Breast epithelium (tissue), 4 donors: ENCODE measurements at regions of chr16 and their contacts with region 1.

Region 1: DNA sequence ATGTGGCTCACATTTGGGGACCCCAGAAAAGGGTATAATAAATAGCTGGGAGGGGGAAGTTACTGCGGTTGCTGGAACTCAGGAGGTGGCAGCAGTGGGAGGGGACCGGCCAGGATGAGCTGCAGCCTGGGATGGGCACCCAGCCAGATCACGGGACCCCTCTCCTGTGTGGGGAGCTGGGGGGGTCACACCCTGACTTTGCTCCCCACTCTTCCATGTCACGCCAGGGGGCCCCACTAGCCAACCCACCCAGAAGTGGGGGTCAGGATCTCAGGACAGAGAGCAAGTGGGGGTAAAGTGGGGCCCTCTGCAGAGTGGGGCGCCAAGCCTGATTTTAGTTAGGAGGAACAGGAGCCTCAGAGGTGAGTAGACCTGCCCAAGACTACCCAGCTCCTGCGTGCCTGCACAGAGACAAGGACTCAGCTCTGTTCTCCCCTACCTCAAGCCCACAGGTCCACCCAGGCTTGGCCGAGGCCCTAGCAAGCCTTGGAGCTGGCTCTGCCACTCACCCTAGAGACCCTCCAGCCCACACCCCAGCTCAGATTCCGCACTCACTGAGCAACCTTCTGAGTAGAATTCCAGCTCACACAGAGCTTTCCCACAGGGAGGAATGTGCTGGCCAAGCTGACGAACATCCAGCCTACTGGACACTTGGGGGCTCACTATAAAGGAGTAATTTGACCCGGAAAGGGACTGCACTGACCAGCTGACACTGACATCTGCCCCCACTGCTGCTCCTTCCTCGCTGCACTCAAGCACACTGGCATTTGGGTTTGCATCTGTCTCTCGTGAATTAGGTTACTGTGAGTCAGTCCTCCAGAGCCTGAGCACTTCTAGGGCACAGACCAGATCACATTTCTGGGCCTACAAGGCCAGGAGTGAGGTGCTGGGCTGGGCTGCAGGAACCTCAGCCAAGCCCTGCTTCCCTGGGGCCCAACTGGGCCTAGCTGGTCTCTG is 310.1 kb downstream of the C16orf95 start:
- DNase-seq: no peak
- H3K4me3 ChIP-seq: no peak overlapping the region
- H3K27ac ChIP-seq: no peak overlapping the region
- H3K4me1 ChIP-seq: no peaks in the 10 kb centered on the region
- H3K27me3 ChIP-seq: no peaks in the 10 kb centered on the region
- CTCF ChIP-seq: no peak
- POLR2A ChIP-seq: no peak

Region 2: GRCh38 chr16:86732621-86733295 is 274.3 kb before region 1 on chr16:
- intact Hi-C with region 1: no loop called
- DNase-seq: no peak
- H3K4me3 ChIP-seq: no peak overlapping the region
- H3K27ac ChIP-seq: no peak overlapping the region
- H3K4me1 ChIP-seq: no peaks in the 10 kb centered on the region
- H3K27me3 ChIP-seq: peaks cover 0 to 14% of the 10 kb centered on the region in 2 donors
- CTCF ChIP-seq: no peak
- POLR2A ChIP-seq: no peak

Region 3: GRCh38 chr16:86965840-86966545 is 41.1 kb before region 1 on chr16:
- intact Hi-C with region 1: loop called (anchors 1 kb)
- DNase-seq: no peak
- H3K4me3 ChIP-seq: no peak overlapping the region
- H3K27ac ChIP-seq: no peak overlapping the region
- H3K4me1 ChIP-seq: no peaks in the 10 kb centered on the region
- H3K27me3 ChIP-seq: no peaks in the 10 kb centered on the region
- CTCF ChIP-seq: no peak
- POLR2A ChIP-seq: no peak

Region 4: DNA sequence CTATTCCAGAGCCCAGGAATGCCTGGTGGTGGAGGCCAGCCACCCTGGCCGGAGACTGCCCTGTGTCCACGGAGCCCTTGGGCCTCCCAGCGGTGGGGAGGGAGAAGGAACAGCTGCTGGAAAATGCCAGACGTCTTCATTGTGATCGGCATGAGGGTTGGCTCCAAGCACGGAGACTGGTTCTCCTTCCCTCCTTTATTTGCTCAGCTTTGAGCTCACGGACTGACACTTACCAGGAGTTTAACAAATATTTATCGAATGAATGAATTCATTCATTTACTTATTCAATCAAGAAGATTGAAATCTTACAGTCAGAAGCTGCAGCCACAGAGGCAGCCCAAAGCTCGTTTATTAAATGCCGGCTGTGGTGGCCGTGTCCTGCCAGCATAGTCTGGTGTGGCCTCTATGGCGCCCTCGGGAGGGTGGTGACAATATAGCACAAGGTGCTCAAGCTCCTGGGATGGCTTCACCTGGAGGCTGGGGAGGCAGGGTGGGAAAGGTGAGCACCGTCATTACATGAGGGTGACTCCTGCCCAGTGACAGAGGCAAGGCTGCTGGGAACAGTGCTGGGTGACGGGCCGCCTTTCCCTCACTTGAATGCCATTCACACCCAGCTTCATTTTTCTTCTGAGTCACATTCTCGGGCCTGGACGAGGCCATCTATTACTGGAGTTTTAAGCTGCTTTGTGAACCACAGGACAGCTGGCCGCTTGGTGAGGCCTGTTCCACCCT is 564.2 kb after region 1 on chr16:
- intact Hi-C with region 1: no loop called
- DNase-seq: peak in 1 of 2 donors; percentile 71
- H3K4me3 ChIP-seq: no peak overlapping the region
- H3K27ac ChIP-seq: peak overlapping the region in 1 of 2 donors; percentile 7
- H3K4me1 ChIP-seq: no peaks in the 10 kb centered on the region
- H3K27me3 ChIP-seq: peaks cover 0 to 11% of the 10 kb centered on the region in 2 donors
- CTCF ChIP-seq: peak in 1 of 3 donors; percentile 39
- POLR2A ChIP-seq: no peak